K562 (cell line): ENCODE measurements at regions of chr19 and their contacts with region 1.

Region 1: GRCh38 chr19:44845612-44846454 is at the start of gene NECTIN2:
- DNase-seq: peak; percentile 97 to 98 (median 98)
- ATAC-seq: peak; percentile 61
- H3K4me3 ChIP-seq: peak within 1 kb of the TSS; percentile 92
- H3K27ac ChIP-seq: peak within 1 kb of the TSS; percentile 97
- H3K4me1 ChIP-seq: peaks cover 38 to 64% of the 10 kb centered on the region in 2 experiments
- H3K27me3 ChIP-seq: no peaks in the 10 kb centered on the region
- CTCF ChIP-seq: peak; percentile 76 to 92 (median 87)
- EP300 ChIP-seq: no peak
- POLR2A ChIP-seq: peak; percentile 64
- RAD21 ChIP-seq: peak; percentile 51 to 55; a peak in 3 of 4 replicates
- polyA plus RNA-seq, gene NECTIN2: 3.9 to 4.9 TPM

Region 2: GRCh38 chr19:44367024-44367423 is 478.8 kb before region 1 on chr19:
- CTCF ChIA-PET with region 1: no interaction called
- POLR2A ChIA-PET with region 1: no interaction called
- in situ Hi-C with region 1: no loop called
- intact Hi-C with region 1: no loop called
- DNase-seq: peak in 3 of 4 experiments; percentile 5 to 16 (median 6)
- ATAC-seq: no peak
- H3K4me3 ChIP-seq: no peak overlapping the region
- H3K27ac ChIP-seq: no peak overlapping the region
- H3K4me1 ChIP-seq: no peaks in the 10 kb centered on the region
- H3K27me3 ChIP-seq: no peaks in the 10 kb centered on the region
- CTCF ChIP-seq: no peak
- EP300 ChIP-seq: no peak
- POLR2A ChIP-seq: no peak
- RAD21 ChIP-seq: no peak

Region 3: DNA sequence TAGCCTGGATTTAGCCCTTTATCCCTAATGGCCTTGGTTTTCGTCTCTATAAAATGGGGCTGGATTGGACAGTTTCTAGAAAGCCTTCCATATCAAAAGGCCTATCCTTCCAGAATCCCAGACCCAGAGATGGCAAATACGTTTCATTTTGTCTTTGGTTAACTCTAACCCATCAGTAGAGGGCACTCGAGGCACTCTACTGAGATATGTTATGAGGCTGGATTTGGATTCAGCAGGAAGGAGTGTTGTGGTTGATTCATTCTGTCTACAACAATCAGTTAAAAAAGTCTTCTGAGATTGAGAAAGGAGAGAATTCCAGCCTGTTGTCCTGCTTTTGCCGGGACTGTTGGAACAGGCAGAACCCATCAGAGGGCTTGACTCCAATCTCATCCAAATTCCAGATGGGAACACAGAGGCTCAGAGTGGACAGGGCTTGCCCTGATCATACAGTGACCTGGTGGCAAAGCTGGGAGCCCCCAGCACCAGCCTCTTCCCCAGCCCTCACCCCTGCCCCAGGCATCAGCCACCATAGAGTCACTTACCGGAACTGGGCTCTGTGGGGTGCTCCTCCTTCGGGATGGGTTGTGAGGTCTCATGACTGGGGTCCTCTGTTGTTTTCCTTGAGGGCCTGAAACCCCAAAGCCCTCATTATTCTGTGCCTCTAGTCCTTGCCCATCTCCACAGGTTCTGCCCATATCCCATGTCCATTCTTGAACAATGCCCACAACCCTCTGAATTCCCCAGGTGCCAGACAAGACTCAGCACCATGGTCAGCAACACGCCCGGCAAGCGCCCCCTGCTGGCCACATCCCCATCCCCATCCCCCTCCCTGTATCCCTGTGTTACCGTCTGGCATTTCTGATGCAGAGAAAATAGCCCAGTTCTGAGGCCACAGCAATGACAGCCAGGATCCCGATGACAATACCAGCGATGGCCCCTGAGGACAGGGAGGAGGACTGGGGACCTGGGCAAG is 333.2 kb before region 1 on chr19:
- CTCF ChIA-PET with region 1: interaction called, 13 read pairs
- POLR2A ChIA-PET with region 1: no interaction called
- in situ Hi-C with region 1: no loop called
- intact Hi-C with region 1: no loop called
- DNase-seq: peak; percentile 64 to 81 (median 78)
- ATAC-seq: peak; percentile 97
- H3K4me3 ChIP-seq: no peak overlapping the region
- H3K27ac ChIP-seq: no peak overlapping the region
- H3K4me1 ChIP-seq: no peaks in the 10 kb centered on the region
- H3K27me3 ChIP-seq: peaks cover 2 to 7% of the 10 kb centered on the region in 2 experiments; a peak in 1 of 5 replicates
- CTCF ChIP-seq: peak; percentile 73 to 82 (median 75)
- EP300 ChIP-seq: no peak
- POLR2A ChIP-seq: no peak
- RAD21 ChIP-seq: peak in 1 of 2 experiments; percentile 62; a peak in 2 of 4 replicates

Region 4: GRCh38 chr19:44653977-44654774 is 191.7 kb before region 1 on chr19:
- CTCF ChIA-PET with region 1: interaction called, 14 read pairs
- POLR2A ChIA-PET with region 1: no interaction called
- in situ Hi-C with region 1: no loop called
- intact Hi-C with region 1: no loop called
- DNase-seq: peak; percentile 55 to 72 (median 58)
- ATAC-seq: peak; percentile 82
- H3K4me3 ChIP-seq: no peak overlapping the region
- H3K27ac ChIP-seq: no peak overlapping the region
- H3K4me1 ChIP-seq: peaks cover 0 to 13% of the 10 kb centered on the region in 2 experiments; a peak in 2 of 5 replicates
- H3K27me3 ChIP-seq: no peaks in the 10 kb centered on the region
- CTCF ChIP-seq: peak; percentile 78 to 83 (median 79)
- EP300 ChIP-seq: no peak
- POLR2A ChIP-seq: no peak
- RAD21 ChIP-seq: peak; percentile 69 to 70

Region 5: GRCh38 chr19:44723952-44724319 is 121.9 kb before region 1 on chr19:
- CTCF ChIA-PET with region 1: interaction called, 26 read pairs
- POLR2A ChIA-PET with region 1: interaction called, 4 read pairs
- in situ Hi-C with region 1: no loop called
- intact Hi-C with region 1: loop called (anchors 1 kb)
- DNase-seq: peak; percentile 83 to 88 (median 86)
- ATAC-seq: peak; percentile 94
- H3K4me3 ChIP-seq: no peak overlapping the region
- H3K27ac ChIP-seq: no peak overlapping the region
- H3K4me1 ChIP-seq: peaks cover 20 to 23% of the 10 kb centered on the region in 2 experiments
- H3K27me3 ChIP-seq: no peaks in the 10 kb centered on the region
- CTCF ChIP-seq: peak; percentile 94 to 98 (median 98)
- EP300 ChIP-seq: no peak
- POLR2A ChIP-seq: no peak
- RAD21 ChIP-seq: peak; percentile 98 to 99

Region 6: GRCh38 chr19:44800461-44800860 is 45.4 kb before region 1 on chr19:
- CTCF ChIA-PET with region 1: interaction called, 20 read pairs
- POLR2A ChIA-PET with region 1: interaction called, 4 read pairs
- in situ Hi-C with region 1: no loop called
- intact Hi-C with region 1: loop called (anchors 1 kb)
- DNase-seq: peak; percentile 87 to 93 (median 91)
- ATAC-seq: peak; percentile 100
- H3K4me3 ChIP-seq: no peak overlapping the region
- H3K27ac ChIP-seq: no peak overlapping the region
- H3K4me1 ChIP-seq: peaks cover 3 to 11% of the 10 kb centered on the region in 2 experiments; a peak in 2 of 5 replicates
- H3K27me3 ChIP-seq: peaks cover 14 to 24% of the 10 kb centered on the region in 2 experiments; a peak in 4 of 5 replicates
- CTCF ChIP-seq: peak; percentile 95 to 99 (median 99)
- EP300 ChIP-seq: no peak
- POLR2A ChIP-seq: no peak
- RAD21 ChIP-seq: peak; percentile 61 to 85

Region 7: DNA sequence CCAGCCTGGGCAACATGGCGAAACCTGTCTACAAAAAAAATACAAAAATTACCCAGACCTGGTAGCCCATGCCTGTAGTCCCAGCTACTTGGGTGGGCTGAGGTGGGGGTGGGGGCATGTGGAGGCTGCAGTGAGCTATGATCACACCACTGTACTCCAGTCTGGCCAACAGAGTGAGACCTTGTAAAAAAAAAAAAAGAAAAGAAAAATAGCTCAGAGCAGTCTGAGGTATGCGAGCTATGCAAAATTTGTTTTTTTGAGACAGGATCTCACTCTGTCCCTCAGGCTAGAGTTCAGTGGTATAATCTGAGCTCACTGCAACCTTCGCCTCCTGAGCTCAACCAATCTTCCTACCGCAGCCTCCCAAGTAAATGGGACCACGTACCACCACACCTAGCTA is 38.1 kb after region 1 on chr19:
- CTCF ChIA-PET with region 1: no interaction called
- POLR2A ChIA-PET with region 1: no interaction called
- in situ Hi-C with region 1: no loop called
- intact Hi-C with region 1: no loop called
- DNase-seq: no peak
- ATAC-seq: no peak
- H3K4me3 ChIP-seq: no peak overlapping the region
- H3K27ac ChIP-seq: no peak overlapping the region
- H3K4me1 ChIP-seq: peaks cover 0 to 17% of the 10 kb centered on the region in 2 experiments; a peak in 2 of 5 replicates
- H3K27me3 ChIP-seq: no peaks in the 10 kb centered on the region
- CTCF ChIP-seq: no peak
- EP300 ChIP-seq: no peak
- POLR2A ChIP-seq: no peak
- RAD21 ChIP-seq: no peak

Region 8: DNA sequence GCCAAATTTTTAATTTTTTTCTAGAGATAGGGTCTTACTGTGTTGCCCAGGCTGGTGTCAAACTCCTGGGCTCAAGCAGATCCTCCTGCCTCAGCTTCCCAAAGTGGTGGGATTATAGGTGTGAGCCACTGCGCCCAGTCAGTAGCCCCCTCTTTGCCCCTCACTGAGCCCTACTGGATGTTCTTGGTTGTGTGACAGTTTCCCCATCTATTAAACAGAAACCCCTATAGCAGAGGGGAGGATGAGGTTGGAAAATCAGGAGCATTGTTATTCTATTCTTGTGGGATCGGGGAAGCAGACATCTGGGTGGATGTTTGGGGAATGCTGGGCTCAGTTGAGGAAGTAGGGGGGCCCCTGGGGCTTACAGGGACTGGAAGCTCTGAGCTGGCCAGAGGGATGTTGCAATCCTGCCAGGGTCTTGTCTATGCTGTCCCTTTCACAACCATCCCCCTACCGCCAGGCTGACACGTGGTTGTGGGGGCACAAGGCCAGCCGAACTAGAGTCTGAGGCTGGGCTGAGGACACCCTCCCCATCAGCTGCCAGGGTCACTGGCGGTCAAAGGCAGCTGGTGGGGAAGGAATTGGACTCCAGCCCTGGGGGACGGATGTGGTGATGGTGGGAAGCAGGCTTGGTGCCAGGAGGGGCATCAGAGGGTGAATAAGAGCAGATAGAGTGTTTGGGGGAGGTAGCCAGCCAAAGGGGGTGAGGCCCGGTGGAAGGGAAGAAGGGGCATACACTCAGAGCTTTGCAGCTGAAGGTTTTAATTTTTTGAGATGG is 79.5 kb after region 1 on chr19:
- CTCF ChIA-PET with region 1: no interaction called
- POLR2A ChIA-PET with region 1: no interaction called
- in situ Hi-C with region 1: no loop called
- intact Hi-C with region 1: no loop called
- DNase-seq: no peak
- ATAC-seq: no peak
- H3K4me3 ChIP-seq: no peak overlapping the region
- H3K27ac ChIP-seq: no peak overlapping the region
- H3K4me1 ChIP-seq: peaks cover 0 to 24% of the 10 kb centered on the region in 2 experiments; a peak in 4 of 5 replicates
- H3K27me3 ChIP-seq: no peaks in the 10 kb centered on the region
- CTCF ChIP-seq: no peak
- EP300 ChIP-seq: no peak
- POLR2A ChIP-seq: no peak
- RAD21 ChIP-seq: no peak